BJ (cell line): ENCODE measurements at regions of chr12 and their contacts with region 1.

Region 1: DNA sequence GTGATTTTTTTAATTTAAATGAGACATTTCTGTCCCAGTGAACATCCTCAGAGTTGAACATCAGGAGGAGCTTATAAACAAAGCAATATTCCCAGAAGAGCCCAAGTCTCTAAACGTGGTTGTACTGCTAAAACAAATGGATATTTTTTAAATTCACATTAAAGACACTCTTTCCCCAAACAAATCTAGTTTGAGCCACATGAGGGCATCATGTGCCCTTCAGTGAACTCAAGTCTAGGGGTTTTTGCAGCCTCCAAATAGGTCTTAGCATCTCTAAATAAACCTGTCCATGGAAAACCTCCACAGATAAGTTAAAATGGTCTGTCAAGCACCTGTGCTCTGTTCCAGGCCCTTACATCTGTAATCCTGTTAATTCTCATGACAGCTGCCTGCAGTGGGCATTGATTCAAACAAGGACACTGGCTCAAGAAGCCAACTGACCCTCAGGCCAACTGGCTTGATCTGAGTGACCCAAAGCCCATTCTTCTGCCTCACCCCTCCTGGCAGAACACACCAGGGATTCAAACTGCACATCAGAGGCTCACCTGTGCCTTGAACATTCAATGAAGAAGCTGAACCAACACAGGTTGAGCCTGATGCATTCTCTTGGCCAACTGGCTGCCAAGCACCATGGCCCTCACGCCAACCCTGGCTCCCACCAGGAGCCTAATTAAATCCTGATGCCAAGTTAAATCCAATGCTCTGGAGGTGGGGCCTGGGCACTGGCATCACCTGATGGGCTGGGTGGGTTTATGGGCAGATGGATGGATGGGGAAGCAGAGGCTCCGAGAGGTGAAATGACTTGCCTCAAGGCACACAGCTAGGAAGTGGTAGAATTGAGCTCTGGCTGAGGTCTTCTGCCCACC is 8.6 kb downstream of the ISCU start:
- DNase-seq: no peak
- H3K4me3 ChIP-seq: no peak overlapping the region
- H3K27me3 ChIP-seq: no peaks in the 10 kb centered on the region; the same call in 1 of the 2 replicates
- CTCF ChIP-seq: peak; percentile 49

Region 2: GRCh38 chr12:108611884-108612415 is 41.0 kb after region 1 on chr12:
- CTCF ChIA-PET with region 1: interaction called, 460 read pairs
- POLR2A ChIA-PET with region 1: no interaction called
- DNase-seq: peak; percentile 49
- H3K4me3 ChIP-seq: no peak overlapping the region
- H3K27me3 ChIP-seq: no peaks in the 10 kb centered on the region
- CTCF ChIP-seq: peak; percentile 48